GM12878 (cell line): ENCODE measurements at regions of chr1 and their contacts with region 1.

Region 1: DNA sequence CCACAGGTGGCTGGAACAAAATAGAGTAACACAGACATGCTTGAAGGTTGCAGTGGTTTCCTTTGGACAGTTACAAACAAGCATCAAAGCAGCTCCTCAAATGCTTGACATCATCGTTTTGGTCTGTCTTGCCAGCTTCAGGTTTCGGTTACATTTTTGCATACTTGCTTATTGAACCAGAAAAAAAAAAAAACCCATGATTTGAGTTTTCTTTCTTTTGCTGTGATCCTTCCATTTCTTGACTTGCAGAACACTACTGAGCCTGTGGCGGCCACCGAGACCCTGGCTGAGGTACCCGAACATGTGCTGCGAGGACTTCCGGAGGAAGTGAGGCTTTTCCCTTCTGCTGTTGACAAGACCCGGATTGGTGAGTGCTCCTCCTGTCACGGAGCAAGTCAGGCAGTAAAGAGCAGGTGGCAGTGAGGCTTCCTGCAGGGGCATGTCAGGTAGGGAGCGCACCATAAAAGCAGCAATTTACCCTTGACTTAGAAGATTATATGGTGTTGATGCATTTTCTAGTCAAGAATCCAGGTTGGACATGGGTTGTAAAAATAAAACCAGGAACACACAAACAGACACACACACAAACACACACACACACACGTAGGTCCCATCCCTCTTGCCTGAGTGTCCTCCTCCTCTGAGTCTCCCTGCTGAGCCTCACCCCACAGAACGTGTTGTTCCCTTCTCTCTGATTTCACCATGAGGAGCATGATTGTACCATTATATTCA is 30.9 kb downstream of the PRDM2 start:
- DNase-seq: peak; percentile 94
- ATAC-seq: peak; percentile 93
- H3K4me3 ChIP-seq: peak overlapping the region; percentile 54
- H3K27ac ChIP-seq: peak overlapping the region; percentile 98
- H3K4me1 ChIP-seq: peaks cover 56% of the 10 kb centered on the region
- H3K27me3 ChIP-seq: no peaks in the 10 kb centered on the region
- CTCF ChIP-seq: 0 out of 6 replicates have a peak, but pooled peaks of 2 of the 3 experiments have one; percentile 17 to 19
- EP300 ChIP-seq: peak; percentile 61 to 87; a peak in 2 of 4 replicates
- POLR2A ChIP-seq: peak; percentile 81
- RAD21 ChIP-seq: no peak

Region 2: DNA sequence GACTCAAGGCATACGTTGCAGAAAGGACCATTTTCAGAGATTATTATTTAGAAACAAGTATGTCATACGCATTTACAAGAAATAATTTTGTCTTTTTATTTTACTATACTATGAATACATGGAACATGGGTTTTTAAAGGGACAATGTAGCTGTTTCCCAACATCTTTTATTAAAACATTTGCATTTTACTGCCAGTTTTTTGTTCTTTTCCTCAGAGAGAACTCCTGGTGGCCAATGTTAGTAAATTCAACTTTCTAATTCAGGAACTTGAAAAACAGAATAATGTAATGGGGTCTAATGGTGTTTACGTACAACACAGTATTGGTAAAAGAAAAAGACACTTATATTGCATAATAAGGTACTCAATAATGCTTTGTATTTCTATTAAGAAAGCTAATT is 16.1 kb before region 1 on chr1:
- CTCF ChIA-PET with region 1: interaction called, 212 read pairs
- POLR2A ChIA-PET with region 1: interaction called, 48 read pairs
- RAD21 ChIA-PET with region 1: interaction called, 367 read pairs
- SMC1A ChIA-PET with region 1: interaction called, 425 read pairs
- in situ Hi-C with region 1: no loop called
- intact Hi-C with region 1: no loop called
- DNase-seq: no peak
- ATAC-seq: no peak
- H3K4me3 ChIP-seq: no peak overlapping the region
- H3K27ac ChIP-seq: no peak overlapping the region
- H3K4me1 ChIP-seq: peaks cover 8% of the 10 kb centered on the region
- H3K27me3 ChIP-seq: no peaks in the 10 kb centered on the region
- CTCF ChIP-seq: 0 out of 6 replicates have a peak, but pooled peaks of 2 of the 3 experiments have one; percentile 4 to 5
- EP300 ChIP-seq: no peak
- POLR2A ChIP-seq: no peak
- RAD21 ChIP-seq: no peak